Pancreas (tissue), 10 donors: ENCODE measurements at regions of chrX and their contacts with region 1.

Region 1: DNA sequence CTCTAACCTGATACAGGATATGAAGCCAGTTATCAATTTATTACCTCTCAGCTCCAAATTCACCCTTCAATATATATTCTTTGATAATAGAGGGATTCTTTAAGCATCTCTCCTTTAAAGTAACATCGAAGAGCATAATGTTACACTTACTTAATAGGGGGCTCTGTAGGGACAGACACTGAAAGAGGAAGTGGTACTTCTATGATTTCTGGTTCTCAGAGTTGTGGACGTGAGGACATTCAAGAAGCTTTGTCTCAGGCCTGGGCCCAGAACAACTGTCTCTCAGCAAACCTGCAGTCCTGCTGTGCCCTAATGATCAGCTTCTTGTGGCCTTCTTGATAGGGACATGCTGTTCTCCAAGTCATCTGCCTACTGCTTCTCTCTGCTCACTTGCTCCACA is 4.2 kb upstream of the ZXDB start:
- DNase-seq: no peak
- ATAC-seq: no peak
- H3K4me3 ChIP-seq: no peak overlapping the region
- H3K27ac ChIP-seq: no peak overlapping the region
- H3K4me1 ChIP-seq: no peaks in the 10 kb centered on the region
- H3K27me3 ChIP-seq: peaks cover 0 to 3% (median 0%) of the 10 kb centered on the region in 4 donors
- CTCF ChIP-seq: no peak

Region 2: GRCh38 chrX:57643698-57644097 is 56.1 kb after region 1 on chrX:
- intact Hi-C with region 1: no loop called
- DNase-seq: no peak
- ATAC-seq: no peak
- H3K4me3 ChIP-seq: no peak overlapping the region
- H3K27ac ChIP-seq: no peak overlapping the region
- H3K4me1 ChIP-seq: no peaks in the 10 kb centered on the region
- H3K27me3 ChIP-seq: no peaks in the 10 kb centered on the region
- CTCF ChIP-seq: no peak

Region 3: GRCh38 chrX:57929373-57929772 is 341.8 kb after region 1 on chrX:
- intact Hi-C with region 1: loop called in 1 of 3 experiments (anchors 10 kb)
- DNase-seq: no peak
- ATAC-seq: peak in 3 of 4 donors; percentile 66 to 76 (median 76)
- H3K4me3 ChIP-seq: no peak overlapping the region
- H3K27ac ChIP-seq: no peak overlapping the region
- H3K4me1 ChIP-seq: no peaks in the 10 kb centered on the region
- H3K27me3 ChIP-seq: peaks cover 0 to 4% (median 0%) of the 10 kb centered on the region in 4 donors
- CTCF ChIP-seq: peak in 2 of 4 donors; percentile 10 to 20

Region 4: DNA sequence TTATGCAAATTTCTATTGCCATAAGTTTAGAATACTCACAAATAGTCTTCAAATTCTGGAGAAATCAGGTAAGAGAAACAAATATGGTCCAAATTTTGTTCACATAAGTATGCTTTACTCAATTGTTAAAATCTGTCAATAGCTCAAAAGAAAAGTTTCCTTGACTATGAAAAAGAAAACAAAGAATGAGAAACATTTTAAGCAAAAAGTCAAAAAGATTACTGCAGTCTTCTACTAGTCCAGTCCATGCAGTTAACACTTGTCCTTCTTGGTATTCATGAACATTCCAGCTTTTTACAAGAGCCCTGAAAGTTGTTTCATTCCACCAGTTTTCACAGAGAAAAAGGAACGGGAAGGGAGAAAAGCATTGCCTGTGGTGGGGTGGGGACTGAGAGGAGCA is 377.4 kb after region 1 on chrX:
- intact Hi-C with region 1: no loop called
- DNase-seq: no peak
- ATAC-seq: no peak
- H3K4me3 ChIP-seq: no peak overlapping the region
- H3K27ac ChIP-seq: no peak overlapping the region
- H3K4me1 ChIP-seq: no peaks in the 10 kb centered on the region
- H3K27me3 ChIP-seq: peaks cover 0 to 3% (median 0%) of the 10 kb centered on the region in 4 donors
- CTCF ChIP-seq: no peak